Stomach (tissue), 19 donors: ENCODE measurements at regions of chr6 and their contacts with region 1.

Region 1: GRCh38 chr6:20056350-20056992 is 155.8 kb downstream of the MBOAT1 start:
- DNase-seq: peak in 1 of 2 donors; percentile 79
- H3K4me3 ChIP-seq: no peak overlapping the region
- H3K27ac ChIP-seq: no peak overlapping the region
- H3K4me1 ChIP-seq: peaks cover 0 to 7% (median 0%) of the 10 kb centered on the region in 4 donors
- H3K27me3 ChIP-seq: no peaks in the 10 kb centered on the region
- CTCF ChIP-seq: peak in 4 of 7 experiments; percentile 13 to 42 (median 36)
- EP300 ChIP-seq: no peak
- POLR2A ChIP-seq: no peak

Region 2: DNA sequence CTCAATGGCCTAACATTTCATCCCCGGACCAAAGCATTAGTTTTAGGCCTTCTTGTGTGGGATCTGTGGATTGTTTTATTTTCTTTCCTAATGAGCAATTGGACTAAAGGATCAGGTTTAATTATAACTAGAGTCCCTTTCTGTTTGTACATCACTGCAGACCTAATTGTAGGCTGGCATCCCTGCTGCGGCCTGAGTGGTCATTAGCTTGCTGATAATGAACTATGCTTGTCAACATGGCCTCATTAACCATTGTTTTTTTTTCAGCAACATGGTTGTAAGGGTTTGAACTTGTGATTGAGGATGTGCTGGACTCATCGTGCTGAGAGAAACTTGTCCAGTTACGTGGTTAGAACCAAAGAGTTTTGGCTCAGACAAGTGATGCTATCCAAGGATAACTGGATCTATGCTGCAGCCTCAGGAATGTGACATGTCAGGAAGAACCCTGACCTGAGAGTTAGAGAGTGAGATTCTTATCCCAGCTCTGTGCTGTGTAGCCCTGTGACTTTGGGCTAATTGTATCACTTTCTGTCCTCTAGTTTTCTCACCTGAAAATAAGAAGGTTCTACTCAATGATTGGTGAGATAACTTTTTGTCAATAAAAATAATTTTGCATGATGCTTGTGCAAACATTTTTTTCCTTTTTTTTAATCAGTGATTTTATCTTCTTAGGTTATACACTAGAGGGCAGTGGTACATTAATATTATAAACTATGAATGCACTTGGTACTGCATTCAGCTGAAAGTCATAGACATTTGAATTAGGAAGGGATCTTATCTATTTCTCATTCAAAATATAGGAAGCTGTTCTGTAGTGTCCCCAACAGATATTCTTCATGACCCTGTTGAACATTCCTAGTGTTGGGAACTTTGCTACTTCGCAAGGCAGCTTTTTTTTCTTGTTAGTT is 1528.4 kb before region 1 on chr6:
- intact Hi-C with region 1: loop called (anchors 10 kb)
- DNase-seq: peak in 1 of 2 donors; percentile 16
- H3K4me3 ChIP-seq: no peak overlapping the region
- H3K27ac ChIP-seq: no peak overlapping the region
- H3K4me1 ChIP-seq: no peaks in the 10 kb centered on the region
- H3K27me3 ChIP-seq: no peaks in the 10 kb centered on the region
- CTCF ChIP-seq: peak in 1 of 7 experiments; percentile 13
- EP300 ChIP-seq: no peak
- POLR2A ChIP-seq: no peak

Region 3: DNA sequence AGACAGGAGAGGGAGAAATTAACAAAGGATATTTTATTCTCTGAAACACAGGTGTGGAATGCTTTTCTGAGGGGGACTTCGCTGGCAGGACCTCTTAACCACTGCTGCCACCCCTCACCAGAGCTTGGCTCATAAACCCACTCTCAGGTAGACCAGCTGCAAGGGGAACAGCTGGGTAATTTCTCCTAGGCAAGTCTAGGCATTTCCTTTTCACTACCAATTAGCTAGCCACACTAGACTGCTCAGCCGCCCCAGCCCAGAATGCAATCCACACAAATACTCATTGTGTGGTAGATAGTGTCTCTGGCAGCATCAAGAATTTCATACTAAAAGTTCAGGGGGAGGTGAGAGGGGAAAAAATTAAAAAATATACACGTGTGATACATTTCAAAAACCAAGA is 486.9 kb before region 1 on chr6:
- intact Hi-C with region 1: no loop called
- DNase-seq: no peak
- H3K4me3 ChIP-seq: no peak overlapping the region
- H3K27ac ChIP-seq: no peak overlapping the region
- H3K4me1 ChIP-seq: no peaks in the 10 kb centered on the region
- H3K27me3 ChIP-seq: no peaks in the 10 kb centered on the region
- CTCF ChIP-seq: no peak
- EP300 ChIP-seq: no peak
- POLR2A ChIP-seq: no peak

Region 4: DNA sequence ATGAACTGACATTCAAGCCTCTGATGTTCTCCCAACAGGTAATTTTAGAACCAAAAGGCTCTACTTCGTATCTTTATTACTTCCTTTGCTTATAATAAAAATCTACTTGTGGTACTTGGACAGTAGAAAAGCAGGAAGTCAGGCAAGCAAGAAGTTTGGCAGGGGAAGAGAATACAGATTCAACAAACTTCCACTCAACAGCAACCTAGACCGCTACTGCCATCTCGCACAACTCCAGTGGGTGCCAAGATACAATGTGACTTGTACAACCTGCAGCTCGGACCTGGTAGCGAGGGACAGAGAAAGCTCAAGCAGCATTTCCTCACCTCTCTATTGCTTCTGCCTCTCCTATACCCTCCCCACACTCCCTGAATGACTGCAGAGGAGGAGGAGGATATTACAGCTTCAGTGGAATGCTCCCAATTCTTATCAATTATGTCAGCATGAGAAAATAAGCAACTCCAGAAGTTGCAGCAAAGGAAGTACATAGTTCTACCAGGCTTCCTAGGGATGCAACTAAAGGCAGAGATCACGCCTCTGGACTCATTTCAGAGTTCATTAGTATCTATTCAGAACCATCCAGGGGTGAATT is 79.3 kb after region 1 on chr6:
- intact Hi-C with region 1: no loop called
- DNase-seq: no peak
- H3K4me3 ChIP-seq: no peak overlapping the region
- H3K27ac ChIP-seq: no peak overlapping the region
- H3K4me1 ChIP-seq: peaks cover 0 to 5% (median 0%) of the 10 kb centered on the region in 4 donors
- H3K27me3 ChIP-seq: no peaks in the 10 kb centered on the region
- CTCF ChIP-seq: no peak
- EP300 ChIP-seq: no peak
- POLR2A ChIP-seq: no peak

Region 5: DNA sequence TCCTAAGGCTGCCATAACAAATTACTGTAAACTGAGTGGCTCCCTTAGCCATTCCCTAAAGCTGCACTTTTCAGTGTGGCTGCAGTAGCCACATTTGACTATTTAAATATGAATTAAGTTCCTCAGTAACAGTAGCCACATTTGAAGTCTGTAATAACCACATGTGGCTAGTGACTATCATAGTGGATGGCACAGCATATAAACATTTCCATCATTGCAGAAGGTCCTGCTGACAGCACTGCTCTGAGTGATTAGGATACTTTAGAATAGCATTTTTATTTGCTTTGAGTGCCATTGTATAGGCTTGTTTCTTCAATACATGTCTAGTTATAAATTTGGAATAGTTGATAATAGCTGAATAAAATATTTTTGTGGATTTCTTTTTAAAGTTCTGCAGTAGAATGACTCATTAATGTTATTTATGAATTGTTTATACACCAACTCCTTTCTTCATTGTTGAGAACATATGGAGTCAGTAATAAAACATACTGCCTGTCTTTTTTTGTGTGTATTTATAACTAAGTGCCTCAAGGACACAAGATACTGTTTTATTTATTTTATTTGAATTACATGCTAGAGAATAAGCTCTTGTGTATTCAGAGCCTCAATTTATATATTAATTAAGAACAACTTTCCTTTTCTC is 694.9 kb after region 1 on chr6:
- intact Hi-C with region 1: no loop called
- DNase-seq: no peak
- H3K4me3 ChIP-seq: no peak overlapping the region
- H3K27ac ChIP-seq: no peak overlapping the region
- H3K4me1 ChIP-seq: peaks cover 0 to 12% (median 2%) of the 10 kb centered on the region in 4 donors
- H3K27me3 ChIP-seq: no peaks in the 10 kb centered on the region
- CTCF ChIP-seq: no peak
- EP300 ChIP-seq: no peak
- POLR2A ChIP-seq: no peak